ENCODE measurements at regions of chr14 and their contacts with region 1.

Region 1: DNA sequence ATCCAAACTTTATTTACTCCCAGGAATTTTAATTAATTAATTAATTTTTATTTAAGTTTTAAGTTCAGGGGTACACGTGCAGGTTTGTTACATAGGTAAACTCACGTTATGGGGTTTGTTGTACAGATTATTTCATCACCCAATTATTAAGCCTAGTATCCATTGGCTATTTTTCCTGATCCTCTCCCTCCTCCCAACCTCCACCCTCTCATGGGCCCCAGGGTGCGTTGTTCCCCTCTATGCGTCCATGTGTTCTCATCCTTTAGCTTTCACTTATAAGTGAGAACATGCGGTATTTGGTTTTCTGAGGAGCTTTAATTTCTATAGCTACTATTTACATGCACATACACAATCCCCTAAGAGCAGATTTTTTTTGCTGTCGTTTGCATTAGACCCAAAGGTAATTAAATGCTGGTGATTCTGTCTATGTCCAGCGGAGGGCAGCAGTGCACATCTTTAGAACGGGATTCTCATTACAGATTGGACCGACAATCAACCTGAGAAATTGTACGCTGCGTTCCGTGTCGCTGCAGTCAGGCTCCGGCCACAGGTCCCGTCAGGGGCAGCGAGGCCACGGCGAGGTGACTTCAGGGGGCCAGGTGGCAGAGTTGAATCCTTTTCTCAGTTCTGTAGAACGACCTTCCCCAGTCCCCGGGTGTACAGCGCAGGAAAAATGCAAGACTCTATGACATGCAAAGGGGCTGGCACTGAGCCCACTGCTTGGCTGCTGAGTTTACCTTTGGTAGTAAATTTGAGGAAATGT is 11.6 kb downstream of the TMEM30B start:
- DNase-seq: peak; percentile 62
- H3K4me3 Mint-ChIP-seq: peak overlapping the region; percentile 48
- H3K27ac Mint-ChIP-seq: no peak overlapping the region
- H3K4me1 Mint-ChIP-seq: no peaks in the 10 kb centered on the region
- H3K27me3 Mint-ChIP-seq: peaks cover 61% of the 10 kb centered on the region

Region 2: DNA sequence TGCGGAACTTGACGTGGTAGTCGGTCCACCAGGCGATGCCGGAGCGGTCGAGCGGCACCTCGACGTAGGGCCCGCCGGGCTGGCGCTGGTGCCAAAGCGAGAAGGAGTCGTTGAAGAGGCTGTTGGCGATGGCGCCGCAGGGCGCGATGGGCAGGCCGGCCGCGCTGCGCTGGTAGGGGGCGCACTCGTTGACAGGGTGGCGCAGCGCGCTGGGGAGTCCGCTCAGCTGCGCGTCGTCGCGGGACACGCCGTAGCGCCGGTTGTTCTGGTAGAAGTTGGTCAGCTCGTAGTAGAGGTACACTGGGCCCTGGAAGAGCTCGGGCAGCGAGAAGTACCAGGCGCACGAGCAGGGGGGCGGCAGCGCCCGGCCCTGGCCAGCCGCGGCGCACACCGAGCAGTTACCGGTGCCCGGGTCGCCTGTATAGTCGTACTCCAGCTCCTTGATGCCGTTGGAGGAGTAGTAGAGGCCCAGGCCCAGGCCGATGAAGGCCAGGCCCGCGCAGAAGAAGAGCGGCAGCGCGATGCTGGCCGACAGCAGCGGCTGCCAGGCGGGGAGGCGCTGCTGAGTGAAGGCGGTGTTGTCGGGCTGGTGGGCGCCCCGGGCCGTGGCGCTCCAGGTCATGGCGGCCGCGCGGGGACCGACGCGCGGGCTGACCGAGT is 11.2 kb after region 1 on chr14:
- intact Hi-C with region 1: loop called (anchors 1 kb)
- DNase-seq: peak; percentile 68
- H3K4me3 Mint-ChIP-seq: peak overlapping the region; percentile 84
- H3K27ac Mint-ChIP-seq: peak overlapping the region; percentile 69
- H3K4me1 Mint-ChIP-seq: peaks cover 34% of the 10 kb centered on the region
- H3K27me3 Mint-ChIP-seq: peaks cover 25% of the 10 kb centered on the region

Region 3: DNA sequence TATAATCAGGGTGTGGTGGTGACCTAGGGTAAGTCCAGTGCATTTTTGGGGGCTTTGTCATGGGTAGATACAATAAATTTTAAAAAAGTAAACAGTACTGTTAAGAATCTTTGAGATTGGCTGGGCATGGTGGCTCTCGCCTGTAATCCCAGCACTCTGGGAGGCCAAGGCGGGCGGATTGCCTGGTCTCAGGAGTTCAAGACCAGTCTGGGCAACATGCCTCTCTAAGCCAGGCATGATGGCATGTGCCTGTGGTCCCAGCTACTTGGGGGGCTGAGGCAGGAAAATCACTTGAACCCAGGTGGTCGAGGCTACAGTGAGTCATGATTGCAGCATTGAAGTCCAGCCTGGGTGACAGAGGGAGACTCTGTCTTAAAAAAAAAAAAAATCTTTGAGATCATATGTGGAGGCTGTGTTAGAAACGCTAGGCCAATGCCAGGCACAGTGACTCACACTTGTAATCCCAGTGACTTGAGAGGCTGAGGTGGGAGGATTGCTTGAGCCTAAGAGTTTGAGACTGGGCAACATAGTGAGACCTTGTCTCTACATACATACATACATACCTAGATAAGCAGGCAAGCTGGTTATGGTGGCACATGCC is 119.6 kb after region 1 on chr14:
- intact Hi-C with region 1: no loop called
- DNase-seq: no peak
- H3K4me3 Mint-ChIP-seq: no peak overlapping the region
- H3K27ac Mint-ChIP-seq: no peak overlapping the region
- H3K4me1 Mint-ChIP-seq: peaks cover 18% of the 10 kb centered on the region
- H3K27me3 Mint-ChIP-seq: no peaks in the 10 kb centered on the region